MCF 10A (cell line): ENCODE measurements at regions of chr5 and their contacts with region 1.

Region 1: DNA sequence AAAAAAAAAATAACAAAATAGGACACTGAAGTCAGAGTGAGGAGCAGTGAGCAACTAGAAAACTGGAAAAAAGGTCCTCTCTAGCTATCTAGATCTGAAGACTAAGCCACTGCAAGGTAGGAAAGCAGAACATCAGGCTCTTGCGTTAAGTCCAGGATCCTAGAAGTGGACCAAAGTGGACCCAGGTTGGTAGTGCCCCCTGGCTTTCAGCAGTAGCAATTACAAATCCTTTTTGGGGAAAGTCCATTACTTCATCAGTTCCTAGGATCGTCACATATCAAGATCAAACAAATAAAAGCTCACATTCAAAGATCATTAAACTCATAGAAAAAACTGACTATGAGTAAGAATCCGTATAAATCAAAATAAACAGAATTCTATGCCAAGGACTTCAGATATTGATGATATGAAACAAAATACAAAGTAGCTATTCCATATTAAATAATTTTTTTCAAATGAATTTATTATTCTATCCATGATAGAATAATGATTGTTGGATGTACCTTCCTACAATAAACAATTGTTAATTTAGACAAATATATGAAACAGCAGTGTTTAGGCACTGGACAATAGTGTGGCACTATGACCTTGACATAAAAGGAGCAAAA is 6.5 kb upstream of the RICTOR start:
- DNase-seq: peak; percentile 65
- H3K4me3 Mint-ChIP-seq: no peak overlapping the region
- H3K27ac Mint-ChIP-seq: no peak overlapping the region
- H3K4me1 Mint-ChIP-seq: peaks cover 18% of the 10 kb centered on the region
- H3K27me3 Mint-ChIP-seq: no peaks in the 10 kb centered on the region
- CTCF ChIP-seq: peak; percentile 75

Region 2: DNA sequence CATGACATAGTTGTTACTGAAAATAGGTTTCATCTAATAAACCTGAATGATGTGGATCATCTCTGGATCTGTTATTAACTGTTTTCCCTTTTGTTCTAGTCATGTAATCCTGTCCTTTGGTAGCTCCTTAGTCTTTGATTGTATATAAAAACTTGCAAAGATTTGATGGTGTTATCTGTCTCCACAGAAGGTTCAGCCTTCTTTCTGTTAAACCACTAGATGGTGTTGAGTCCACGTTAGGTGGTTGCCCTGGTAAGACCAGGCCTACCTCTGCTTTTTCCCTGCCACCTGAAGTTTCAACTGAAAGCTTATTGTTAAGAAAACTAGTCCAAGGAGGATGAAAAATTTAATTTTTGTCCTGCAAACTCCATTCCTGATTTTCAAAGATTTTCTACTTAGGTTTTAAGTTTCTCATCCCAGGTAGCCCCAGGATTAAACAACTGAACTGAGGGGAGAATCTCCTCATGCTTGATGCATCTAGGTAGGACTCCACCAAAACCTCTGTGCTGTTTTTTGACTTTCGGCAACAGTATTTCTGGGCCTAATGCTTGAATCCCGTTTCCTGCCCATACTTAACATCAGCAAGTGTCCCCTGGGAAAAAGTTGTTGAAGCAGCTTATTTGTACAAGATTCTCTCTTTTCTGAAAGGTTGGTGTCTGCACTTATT is 75.0 kb before region 1 on chr5:
- CTCF ChIA-PET with region 1: interaction called, 13 read pairs
- POLR2A ChIA-PET with region 1: no interaction called
- intact Hi-C with region 1: loop called (anchors 2 kb)
- DNase-seq: peak; percentile 37
- H3K4me3 Mint-ChIP-seq: no peak overlapping the region
- H3K27ac Mint-ChIP-seq: no peak overlapping the region
- H3K4me1 Mint-ChIP-seq: peaks cover 8% of the 10 kb centered on the region
- H3K27me3 Mint-ChIP-seq: no peaks in the 10 kb centered on the region
- CTCF ChIP-seq: peak; percentile 41

Region 3: DNA sequence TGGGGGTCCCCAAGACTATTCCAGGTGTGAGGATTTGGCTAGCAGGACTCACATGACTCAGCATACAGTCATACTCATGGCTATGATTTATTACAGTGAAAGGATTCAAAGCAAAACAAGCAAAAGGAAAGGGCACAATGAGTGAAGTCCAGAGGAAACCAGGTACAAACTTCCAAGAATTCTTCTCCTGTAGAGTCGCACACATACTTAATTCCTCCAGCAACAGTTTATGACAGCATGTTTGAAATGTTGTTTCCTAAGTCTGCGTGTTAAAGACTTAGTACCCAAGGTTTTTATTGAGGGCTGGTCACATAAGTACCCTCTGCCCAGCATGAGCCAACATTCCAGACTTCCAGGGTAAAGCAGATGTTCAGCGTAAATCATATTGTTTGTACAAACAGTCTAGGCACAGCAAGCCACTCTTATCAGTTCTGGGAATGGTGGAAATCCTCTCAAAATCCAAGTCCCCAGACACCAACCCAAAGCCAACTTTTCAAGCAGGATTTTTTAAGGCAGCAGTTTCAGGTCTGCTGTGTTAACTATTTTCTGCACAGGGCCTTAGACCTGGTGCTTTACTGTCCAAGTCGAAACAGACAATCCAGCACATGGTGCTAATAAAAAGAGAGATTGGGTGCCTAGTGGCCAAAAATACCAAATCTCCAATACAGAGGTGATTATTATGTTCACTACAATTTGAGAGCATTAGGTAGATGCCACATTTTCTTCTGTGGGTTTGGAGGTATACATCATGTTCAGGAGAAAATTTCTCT is 12.1 kb after region 1 on chr5:
- CTCF ChIA-PET with region 1: interaction called, 40 read pairs
- POLR2A ChIA-PET with region 1: interaction called, 7 read pairs
- intact Hi-C with region 1: no loop called
- DNase-seq: peak; percentile 69
- H3K4me3 Mint-ChIP-seq: no peak overlapping the region
- H3K27ac Mint-ChIP-seq: peak overlapping the region; percentile 73
- H3K4me1 Mint-ChIP-seq: peaks cover 10% of the 10 kb centered on the region
- H3K27me3 Mint-ChIP-seq: no peaks in the 10 kb centered on the region
- CTCF ChIP-seq: no peak

Region 4: DNA sequence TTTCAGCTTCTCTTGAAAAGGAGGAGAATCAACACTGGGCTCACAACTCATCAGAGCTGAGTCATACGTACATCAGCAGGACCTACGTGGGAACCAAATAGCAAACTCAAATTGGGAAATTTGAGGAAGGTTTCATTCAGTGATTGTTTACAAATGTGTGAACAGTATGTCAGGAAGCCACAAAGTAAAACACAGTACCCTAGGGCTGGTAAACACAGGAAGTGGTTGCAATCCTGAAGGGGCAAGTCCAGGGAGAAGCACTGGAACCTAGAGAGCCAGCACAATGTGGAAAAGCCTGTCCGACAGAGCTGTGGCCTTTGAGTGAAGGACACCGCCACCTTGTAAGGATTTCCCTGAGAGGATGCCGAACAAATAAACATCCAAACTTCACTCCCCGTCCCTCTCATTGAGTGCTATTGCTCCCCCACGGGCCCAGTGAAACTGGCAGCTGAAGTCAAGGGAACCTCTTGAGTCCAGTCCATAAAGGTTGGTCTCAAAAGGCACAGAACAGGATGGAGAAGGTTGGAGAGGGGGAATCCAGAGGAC is 20.2 kb after region 1 on chr5:
- CTCF ChIA-PET with region 1: interaction called, 40 read pairs
- POLR2A ChIA-PET with region 1: interaction called, 106 read pairs
- intact Hi-C with region 1: loop called (anchors 2 kb)
- DNase-seq: peak; percentile 98
- H3K4me3 Mint-ChIP-seq: peak overlapping the region; percentile 39
- H3K27ac Mint-ChIP-seq: peak overlapping the region; percentile 97
- H3K4me1 Mint-ChIP-seq: peaks cover 51% of the 10 kb centered on the region
- H3K27me3 Mint-ChIP-seq: no peaks in the 10 kb centered on the region
- CTCF ChIP-seq: no peak